Activated CD8-positive, alpha-beta memory T cell treated with anti-CD3 and anti-CD28 coated beads, Interleukin-2, amount 10 ng/mL, durations not matched to agents 7 days and 5 days (primary cell): ENCODE measurements at regions of chr1 and their contacts with region 1.

Region 1: GRCh38 chr1:108897865-108898720 is 21.3 kb downstream of the GPSM2 start:
- DNase-seq: peak; percentile 52
- ATAC-seq: peak; percentile 70
- H3K4me3 Mint-ChIP-seq: no peak overlapping the region
- H3K27ac Mint-ChIP-seq: no peak overlapping the region
- H3K4me1 Mint-ChIP-seq: no peaks in the 10 kb centered on the region
- H3K27me3 Mint-ChIP-seq: no peaks in the 10 kb centered on the region

Region 2: GRCh38 chr1:108814343-108815125 is 83.6 kb before region 1 on chr1:
- CTCF ChIA-PET with region 1: no interaction called
- DNase-seq: no peak
- ATAC-seq: no peak
- H3K4me3 Mint-ChIP-seq: no peak overlapping the region
- H3K27ac Mint-ChIP-seq: no peak overlapping the region
- H3K4me1 Mint-ChIP-seq: no peaks in the 10 kb centered on the region
- H3K27me3 Mint-ChIP-seq: peaks cover 14% of the 10 kb centered on the region

Region 3: GRCh38 chr1:108886292-108886691 is 11.8 kb before region 1 on chr1:
- CTCF ChIA-PET with region 1: interaction called, 11 read pairs
- DNase-seq: no peak
- ATAC-seq: no peak
- H3K4me3 Mint-ChIP-seq: no peak overlapping the region
- H3K27ac Mint-ChIP-seq: no peak overlapping the region
- H3K4me1 Mint-ChIP-seq: peaks cover 1% of the 10 kb centered on the region
- H3K27me3 Mint-ChIP-seq: no peaks in the 10 kb centered on the region

Region 4: GRCh38 chr1:109027841-109028240 is 129.7 kb after region 1 on chr1:
- CTCF ChIA-PET with region 1: no interaction called
- DNase-seq: no peak
- ATAC-seq: no peak
- H3K4me3 Mint-ChIP-seq: no peak overlapping the region
- H3K27ac Mint-ChIP-seq: no peak overlapping the region
- H3K4me1 Mint-ChIP-seq: no peaks in the 10 kb centered on the region
- H3K27me3 Mint-ChIP-seq: no peaks in the 10 kb centered on the region